ENCODE measurements at regions of chr18 and their contacts with region 1.

Region 1: DNA sequence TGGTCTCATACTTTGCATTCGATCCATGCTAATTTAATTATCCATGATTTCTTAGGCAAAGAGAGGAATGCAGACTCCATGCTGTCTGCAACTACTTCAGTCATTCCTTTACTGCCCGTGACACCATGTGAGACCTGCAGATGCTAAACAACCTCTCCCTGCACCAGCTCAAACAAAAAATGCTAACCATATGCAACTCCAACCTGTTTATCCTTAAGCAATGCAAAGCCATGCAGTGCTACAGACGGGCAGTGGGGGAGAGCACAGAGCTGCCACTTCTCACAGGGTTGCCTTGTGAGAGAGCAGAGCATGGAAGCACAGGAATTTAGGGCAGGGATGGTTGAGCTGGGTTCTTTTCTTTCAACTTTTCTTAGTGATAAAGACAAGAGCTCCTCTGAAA is 74.9 kb upstream of the KLHL14 start:
- DNase-seq: no peak
- H3K4me3 Mint-ChIP-seq: no peak overlapping the region
- H3K27ac Mint-ChIP-seq: no peak overlapping the region
- H3K4me1 Mint-ChIP-seq: no peaks in the 10 kb centered on the region
- H3K27me3 Mint-ChIP-seq: no peaks in the 10 kb centered on the region

Region 2: DNA sequence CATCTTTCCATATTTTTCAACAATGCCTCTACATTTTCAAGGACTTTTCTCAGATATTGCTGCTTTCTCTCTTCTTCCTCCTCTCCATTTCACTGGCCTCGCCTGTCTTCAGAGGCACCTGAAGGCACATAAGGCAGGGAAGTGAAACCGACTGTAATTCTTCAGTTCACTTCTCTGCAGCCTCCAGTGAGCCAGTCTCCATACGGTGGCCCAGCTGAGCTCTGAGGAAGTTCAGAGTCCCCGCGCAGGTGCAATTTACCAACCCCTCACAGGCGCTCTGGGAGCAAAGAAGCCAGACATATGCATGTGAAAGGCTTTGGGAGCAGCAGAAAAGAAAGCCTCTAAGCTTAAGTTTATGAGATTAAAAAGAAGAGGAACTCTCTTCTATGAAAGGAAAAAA is 87.3 kb before region 1 on chr18:
- CTCF ChIA-PET with region 1: no interaction called
- POLR2A ChIA-PET with region 1: no interaction called
- intact Hi-C with region 1: no loop called
- DNase-seq: no peak
- H3K4me3 Mint-ChIP-seq: no peak overlapping the region
- H3K27ac Mint-ChIP-seq: no peak overlapping the region
- H3K4me1 Mint-ChIP-seq: peaks cover 2% of the 10 kb centered on the region
- H3K27me3 Mint-ChIP-seq: peaks cover 5% of the 10 kb centered on the region

Region 3: DNA sequence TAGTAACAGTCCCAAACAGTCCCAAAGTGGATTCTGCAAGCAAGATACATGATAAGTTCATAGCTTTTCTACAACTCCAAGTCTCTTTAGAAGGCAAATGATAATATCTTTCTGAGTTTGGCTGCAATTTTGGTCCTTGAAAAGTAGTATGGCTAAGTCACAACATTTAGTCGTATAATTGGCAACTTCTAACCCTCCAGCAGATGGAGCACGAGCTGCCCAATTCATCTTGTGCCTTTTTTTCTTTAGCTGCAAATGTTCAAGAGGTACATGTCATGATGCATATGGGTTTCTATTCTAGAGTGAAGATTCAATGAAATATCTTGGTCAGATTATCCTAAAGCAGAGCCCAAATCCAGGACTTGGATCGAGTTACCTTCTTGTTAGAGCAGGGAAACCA is 52.1 kb after region 1 on chr18:
- CTCF ChIA-PET with region 1: no interaction called
- POLR2A ChIA-PET with region 1: no interaction called
- intact Hi-C with region 1: loop called (anchors 5 kb)
- DNase-seq: no peak
- H3K4me3 Mint-ChIP-seq: no peak overlapping the region
- H3K27ac Mint-ChIP-seq: no peak overlapping the region
- H3K4me1 Mint-ChIP-seq: no peaks in the 10 kb centered on the region
- H3K27me3 Mint-ChIP-seq: no peaks in the 10 kb centered on the region

Measured in activated CD4-positive, alpha-beta memory T cell treated with anti-CD3 and anti-CD28 coated beads for 36 hours (primary cell).